IMR-90 (cell line): ENCODE measurements at regions of chr2 and their contacts with region 1.

Region 1: GRCh38 chr2:141331127-141331526 is 799.7 kb downstream of the LRP1B start:
- DNase-seq: peak; percentile 86
- ATAC-seq: peak; percentile 79
- H3K4me3 ChIP-seq: no peak overlapping the region
- H3K27ac ChIP-seq: peak overlapping the region; percentile 34; the same call in 1 of the 2 replicates
- H3K4me1 ChIP-seq: peaks cover 3% of the 10 kb centered on the region
- H3K27me3 ChIP-seq: no peaks in the 10 kb centered on the region
- CTCF ChIP-seq: no peak
- POLR2A ChIP-seq: no peak
- RAD21 ChIP-seq: no peak

Region 2: GRCh38 chr2:140880573-140880972 is 450.6 kb before region 1 on chr2:
- CTCF ChIA-PET with region 1: no interaction called
- POLR2A ChIA-PET with region 1: no interaction called
- dilution Hi-C with region 1: no loop called
- in situ Hi-C with region 1: no loop called
- intact Hi-C with region 1: loop called (anchors 5 kb)
- DNase-seq: peak; percentile 91
- ATAC-seq: peak; percentile 89
- H3K4me3 ChIP-seq: no peak overlapping the region
- H3K27ac ChIP-seq: peak overlapping the region; percentile 73; the same call in 1 of the 2 replicates
- H3K4me1 ChIP-seq: peaks cover 7% of the 10 kb centered on the region; the same call in 1 of the 2 replicates
- H3K27me3 ChIP-seq: no peaks in the 10 kb centered on the region
- CTCF ChIP-seq: no peak
- POLR2A ChIP-seq: no peak
- RAD21 ChIP-seq: no peak

Region 3: DNA sequence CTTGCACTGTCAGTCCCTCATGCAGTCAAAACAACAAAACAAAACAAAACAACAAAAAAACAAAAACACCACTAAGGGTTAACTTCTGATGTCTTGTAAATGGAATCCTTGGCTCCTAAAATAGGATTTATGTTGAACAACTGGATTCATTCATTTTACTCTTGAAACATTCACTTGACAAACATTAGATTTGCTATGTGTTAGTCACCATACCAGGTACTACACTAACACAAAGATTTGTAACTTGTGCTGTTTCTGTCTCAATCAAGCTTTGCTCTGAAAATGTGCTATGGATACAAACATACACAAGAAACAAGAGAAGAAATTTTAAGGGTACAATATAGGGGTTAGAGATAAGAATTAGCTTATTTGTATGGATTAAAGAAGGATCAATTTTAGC is 13.1 kb before region 1 on chr2:
- CTCF ChIA-PET with region 1: no interaction called
- POLR2A ChIA-PET with region 1: no interaction called
- dilution Hi-C with region 1: no loop called
- in situ Hi-C with region 1: no loop called
- intact Hi-C with region 1: no loop called
- DNase-seq: peak; percentile 57
- ATAC-seq: peak; percentile 78
- H3K4me3 ChIP-seq: no peak overlapping the region
- H3K27ac ChIP-seq: no peak overlapping the region
- H3K4me1 ChIP-seq: no peaks in the 10 kb centered on the region
- H3K27me3 ChIP-seq: no peaks in the 10 kb centered on the region
- CTCF ChIP-seq: no peak
- POLR2A ChIP-seq: no peak
- RAD21 ChIP-seq: no peak

Region 4: GRCh38 chr2:141392517-141393213 is 61.5 kb after region 1 on chr2:
- CTCF ChIA-PET with region 1: no interaction called
- POLR2A ChIA-PET with region 1: no interaction called
- dilution Hi-C with region 1: no loop called
- in situ Hi-C with region 1: no loop called
- intact Hi-C with region 1: loop called (anchors 5 kb)
- DNase-seq: peak; percentile 88
- ATAC-seq: peak; percentile 84
- H3K4me3 ChIP-seq: no peak overlapping the region
- H3K27ac ChIP-seq: peak overlapping the region; percentile 72
- H3K4me1 ChIP-seq: no peaks in the 10 kb centered on the region; the same call in 1 of the 2 replicates
- H3K27me3 ChIP-seq: no peaks in the 10 kb centered on the region
- CTCF ChIP-seq: no peak
- POLR2A ChIP-seq: no peak
- RAD21 ChIP-seq: no peak